SK-N-SH (cell line): ENCODE measurements at regions of chr17 and their contacts with region 1.

Region 1: GRCh38 chr17:41648411-41649195 is 24.2 kb upstream of the KRT17 start:
- DNase-seq: peak; percentile 94
- H3K4me3 ChIP-seq: peak overlapping the region; percentile 36 to 49
- H3K27ac ChIP-seq: no peak overlapping the region
- H3K4me1 ChIP-seq: peaks cover 0 to 15% of the 10 kb centered on the region in 2 experiments; a peak in 1 of 4 replicates
- H3K27me3 ChIP-seq: no peaks in the 10 kb centered on the region
- CTCF ChIP-seq: peak; percentile 92
- EP300 ChIP-seq: no peak
- RAD21 ChIP-seq: peak; percentile 70

Region 2: DNA sequence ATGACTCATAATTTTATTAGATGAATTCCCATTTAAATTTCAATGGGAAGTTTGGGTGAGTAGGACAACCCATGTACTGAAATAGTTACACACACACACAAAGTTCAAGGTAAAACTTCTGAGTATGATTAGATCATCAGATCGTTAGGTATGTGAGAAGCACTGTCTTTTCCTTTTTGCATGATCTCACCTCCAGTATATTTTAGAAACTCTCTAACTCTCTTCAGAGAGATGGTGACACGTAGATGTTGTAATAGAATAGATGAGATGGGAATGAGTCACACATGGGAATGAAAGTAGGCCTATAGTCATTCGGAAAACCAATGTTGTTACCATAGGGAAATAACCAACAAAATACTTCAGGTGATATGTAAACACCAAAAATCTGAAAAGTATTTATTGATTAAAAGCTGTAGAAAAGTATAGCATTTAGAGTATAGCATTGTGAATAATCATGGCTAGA is 733.4 kb before region 1 on chr17:
- CTCF ChIA-PET with region 1: interaction called, 20 read pairs
- POLR2A ChIA-PET with region 1: interaction called, 3 read pairs
- DNase-seq: no peak
- H3K4me3 ChIP-seq: no peak overlapping the region
- H3K27ac ChIP-seq: peak overlapping the region in 1 of 2 experiments; percentile 77; a peak in 2 of 4 replicates
- H3K4me1 ChIP-seq: peaks cover 0 to 8% of the 10 kb centered on the region in 2 experiments; a peak in 2 of 4 replicates
- H3K27me3 ChIP-seq: no peaks in the 10 kb centered on the region
- CTCF ChIP-seq: no peak
- EP300 ChIP-seq: no peak
- RAD21 ChIP-seq: no peak

Region 3: GRCh38 chr17:41530062-41531051 is 118.2 kb before region 1 on chr17:
- CTCF ChIA-PET with region 1: interaction called, 15 read pairs
- POLR2A ChIA-PET with region 1: no interaction called
- DNase-seq: peak; percentile 93
- H3K4me3 ChIP-seq: no peak overlapping the region
- H3K27ac ChIP-seq: peak overlapping the region; percentile 94 to 99
- H3K4me1 ChIP-seq: peaks cover 24 to 38% of the 10 kb centered on the region in 2 experiments
- H3K27me3 ChIP-seq: no peaks in the 10 kb centered on the region
- CTCF ChIP-seq: no peak
- EP300 ChIP-seq: peak; percentile 95 to 97
- RAD21 ChIP-seq: peak; percentile 49

Region 4: GRCh38 chr17:41579484-41580243 is 68.9 kb before region 1 on chr17:
- CTCF ChIA-PET with region 1: interaction called, 57 read pairs
- POLR2A ChIA-PET with region 1: interaction called, 3 read pairs
- DNase-seq: peak; percentile 90
- H3K4me3 ChIP-seq: no peak overlapping the region
- H3K27ac ChIP-seq: no peak overlapping the region
- H3K4me1 ChIP-seq: peaks cover 0 to 3% of the 10 kb centered on the region in 2 experiments; a peak in 1 of 4 replicates
- H3K27me3 ChIP-seq: no peaks in the 10 kb centered on the region; the same call in 1 of the 2 replicates
- CTCF ChIP-seq: peak; percentile 62
- EP300 ChIP-seq: no peak
- RAD21 ChIP-seq: peak; percentile 75

Region 5: DNA sequence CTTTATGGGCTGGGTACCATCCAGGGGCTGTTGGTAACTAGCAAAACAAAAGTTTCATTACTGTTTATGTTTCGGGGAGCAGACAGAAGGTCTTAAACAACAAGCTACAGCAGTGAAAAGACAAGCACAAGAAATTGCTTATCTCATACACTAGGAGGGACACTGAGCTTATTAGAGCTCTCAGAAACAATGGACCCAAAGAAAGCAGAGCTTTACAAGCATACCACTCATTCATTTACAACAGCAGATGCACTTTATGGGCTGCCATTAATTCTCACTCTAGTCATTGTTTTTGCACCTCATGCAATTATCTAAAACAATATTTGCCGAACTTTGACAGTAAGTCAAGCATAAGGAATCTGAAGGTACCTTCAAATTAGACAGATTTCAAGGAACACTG is 46.1 kb before region 1 on chr17:
- CTCF ChIA-PET with region 1: interaction called, 50 read pairs
- POLR2A ChIA-PET with region 1: no interaction called
- DNase-seq: no peak
- H3K4me3 ChIP-seq: no peak overlapping the region
- H3K27ac ChIP-seq: no peak overlapping the region
- H3K4me1 ChIP-seq: peaks cover 0 to 3% of the 10 kb centered on the region in 2 experiments; a peak in 1 of 4 replicates
- H3K27me3 ChIP-seq: peaks cover 16% of the 10 kb centered on the region
- CTCF ChIP-seq: no peak
- EP300 ChIP-seq: no peak
- RAD21 ChIP-seq: no peak

Region 6: GRCh38 chr17:41629826-41630670 is 18.6 kb before region 1 on chr17:
- CTCF ChIA-PET with region 1: interaction called, 79 read pairs
- POLR2A ChIA-PET with region 1: no interaction called
- DNase-seq: no peak
- H3K4me3 ChIP-seq: no peak overlapping the region
- H3K27ac ChIP-seq: no peak overlapping the region
- H3K4me1 ChIP-seq: peaks cover 0 to 6% of the 10 kb centered on the region in 2 experiments; a peak in 2 of 4 replicates
- H3K27me3 ChIP-seq: no peaks in the 10 kb centered on the region
- CTCF ChIP-seq: no peak
- EP300 ChIP-seq: no peak
- RAD21 ChIP-seq: no peak

Region 7: GRCh38 chr17:41678907-41679739 is 30.5 kb after region 1 on chr17:
- CTCF ChIA-PET with region 1: interaction called, 13 read pairs
- POLR2A ChIA-PET with region 1: no interaction called
- DNase-seq: no peak
- H3K4me3 ChIP-seq: no peak overlapping the region
- H3K27ac ChIP-seq: peak overlapping the region in 1 of 2 experiments; percentile 36; a peak in 2 of 4 replicates
- H3K4me1 ChIP-seq: peaks cover 0 to 10% of the 10 kb centered on the region in 2 experiments; a peak in 1 of 4 replicates
- H3K27me3 ChIP-seq: peaks cover 8% of the 10 kb centered on the region; the same call in 1 of the 2 replicates
- CTCF ChIP-seq: no peak; the same call in 1 of the 2 replicates
- EP300 ChIP-seq: no peak
- RAD21 ChIP-seq: no peak